ENCODE measurements at regions of chr16 and their contacts with region 1.

Region 1: GRCh38 chr16:75789237-75789636 is 62.9 kb upstream of the CPHXL start:
- DNase-seq: no peak
- ATAC-seq: peak; percentile 42
- H3K4me3 Mint-ChIP-seq: no peak overlapping the region
- H3K27ac Mint-ChIP-seq: no peak overlapping the region
- H3K4me1 Mint-ChIP-seq: no peaks in the 10 kb centered on the region
- H3K27me3 Mint-ChIP-seq: peaks cover 5% of the 10 kb centered on the region

Region 2: DNA sequence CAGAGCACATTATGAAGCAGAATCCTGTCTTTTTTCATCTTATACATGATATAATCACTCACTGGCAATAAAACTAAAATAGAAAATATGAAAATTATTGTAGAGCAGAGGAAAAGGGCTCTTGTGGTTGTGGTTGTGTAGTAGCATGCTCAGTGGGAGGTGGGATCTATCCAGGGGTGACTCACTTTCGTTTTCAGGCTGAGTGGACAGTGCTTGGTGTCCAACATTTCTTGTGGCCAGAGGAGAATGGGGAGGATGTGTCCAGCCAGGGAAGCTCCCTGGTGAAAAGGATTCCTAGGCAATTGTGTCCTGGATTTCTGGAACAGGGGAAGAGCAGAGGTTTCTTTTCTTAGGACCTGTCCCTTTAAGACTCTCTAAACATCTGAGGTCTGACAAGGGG is 31.0 kb before region 1 on chr16:
- CTCF ChIA-PET with region 1: no interaction called
- POLR2A ChIA-PET with region 1: no interaction called
- intact Hi-C with region 1: no loop called
- DNase-seq: peak; percentile 14
- ATAC-seq: no peak
- H3K4me3 Mint-ChIP-seq: no peak overlapping the region
- H3K27ac Mint-ChIP-seq: no peak overlapping the region
- H3K4me1 Mint-ChIP-seq: peaks cover 11% of the 10 kb centered on the region
- H3K27me3 Mint-ChIP-seq: peaks cover 2% of the 10 kb centered on the region

Region 3: DNA sequence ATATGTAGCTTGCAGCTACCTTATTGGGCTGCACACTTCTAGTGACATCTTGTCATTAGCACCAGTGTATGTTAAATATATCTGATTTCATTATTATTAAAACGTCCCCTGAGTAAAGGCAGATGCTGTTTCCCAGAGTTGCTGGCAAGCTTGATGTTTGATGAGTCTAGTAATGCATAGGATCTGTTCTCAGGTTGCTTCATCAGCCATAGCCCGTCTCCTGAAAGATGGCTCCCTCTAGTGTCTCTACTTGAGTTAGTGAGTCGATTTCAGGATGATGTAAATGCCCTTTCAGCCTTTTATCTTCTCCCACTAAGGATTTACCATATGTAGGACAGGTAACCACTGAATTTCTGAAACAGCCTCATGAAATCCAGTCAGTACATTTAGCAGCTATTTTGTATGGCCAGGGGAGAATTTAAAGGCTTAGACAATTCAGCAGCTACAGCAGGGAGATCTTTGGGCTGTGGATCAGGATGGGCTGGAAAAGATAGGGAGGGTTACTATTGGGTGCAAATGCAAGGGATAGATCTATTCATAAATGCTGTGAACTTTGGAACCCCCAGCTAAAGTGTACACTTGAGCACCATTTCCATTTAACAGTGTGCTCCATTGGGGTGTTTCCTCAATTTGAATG is 864.3 kb after region 1 on chr16:
- CTCF ChIA-PET with region 1: no interaction called
- POLR2A ChIA-PET with region 1: no interaction called
- intact Hi-C with region 1: loop called (anchors 1 to 10 kb)
- DNase-seq: peak; percentile 10
- ATAC-seq: peak; percentile 60
- H3K4me3 Mint-ChIP-seq: no peak overlapping the region
- H3K27ac Mint-ChIP-seq: no peak overlapping the region
- H3K4me1 Mint-ChIP-seq: no peaks in the 10 kb centered on the region
- H3K27me3 Mint-ChIP-seq: peaks cover 2% of the 10 kb centered on the region

Region 4: GRCh38 chr16:77043076-77043475 is 1253.8 kb after region 1 on chr16:
- CTCF ChIA-PET with region 1: no interaction called
- POLR2A ChIA-PET with region 1: no interaction called
- intact Hi-C with region 1: loop called in 1 of 2 experiments (anchors 2 kb)
- DNase-seq: no peak
- ATAC-seq: no peak
- H3K4me3 Mint-ChIP-seq: no peak overlapping the region
- H3K27ac Mint-ChIP-seq: no peak overlapping the region
- H3K4me1 Mint-ChIP-seq: no peaks in the 10 kb centered on the region
- H3K27me3 Mint-ChIP-seq: peaks cover 7% of the 10 kb centered on the region

Measured in activated CD4-positive, alpha-beta T cell treated with anti-CD3 and anti-CD28 coated beads for 36 hours (primary cell).